Psoas muscle (tissue), 8 donors: ENCODE measurements at regions of chr4 and their contacts with region 1.

Region 1: GRCh38 chr4:182486881-182487280 is 243.7 kb downstream of the TENM3 start:
- DNase-seq: no peak
- ATAC-seq: no peak
- H3K4me3 ChIP-seq: no peak overlapping the region
- H3K27ac ChIP-seq: no peak overlapping the region
- H3K4me1 ChIP-seq: peaks cover 5% of the 10 kb centered on the region
- H3K27me3 ChIP-seq: no peaks in the 10 kb centered on the region
- CTCF ChIP-seq: no peak

Region 2: GRCh38 chr4:182555997-182556418 is 69.1 kb after region 1 on chr4:
- intact Hi-C with region 1: no loop called
- DNase-seq: no peak
- ATAC-seq: peak in 2 of 4 donors; percentile 44 to 68
- H3K4me3 ChIP-seq: no peak overlapping the region
- H3K27ac ChIP-seq: no peak overlapping the region
- H3K4me1 ChIP-seq: peaks cover 22% of the 10 kb centered on the region
- H3K27me3 ChIP-seq: no peaks in the 10 kb centered on the region
- CTCF ChIP-seq: no peak

Region 3: DNA sequence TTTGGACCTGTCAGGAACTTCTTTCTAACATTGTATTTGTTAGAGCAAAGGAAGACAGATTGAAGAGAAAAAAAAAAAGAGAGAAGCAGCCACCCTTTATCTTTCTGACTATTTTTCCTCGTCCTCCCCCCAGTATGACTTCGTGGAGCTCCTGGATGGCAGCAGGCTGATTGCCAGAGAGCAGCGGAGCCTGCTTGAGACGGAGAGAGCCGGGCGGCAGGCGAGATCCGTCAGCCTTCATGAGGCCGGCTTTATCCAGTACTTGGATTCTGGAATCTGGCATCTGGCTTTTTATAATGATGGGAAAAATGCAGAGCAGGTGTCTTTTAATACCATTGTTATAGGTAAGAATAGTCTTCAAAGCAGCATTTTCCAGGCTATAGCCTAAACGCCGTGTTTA is 192.7 kb after region 1 on chr4:
- intact Hi-C with region 1: loop called in 1 of 2 experiments (anchors 10 kb)
- DNase-seq: no peak
- ATAC-seq: peak in 3 of 4 donors; percentile 24 to 52 (median 46)
- H3K4me3 ChIP-seq: no peak overlapping the region
- H3K27ac ChIP-seq: no peak overlapping the region
- H3K4me1 ChIP-seq: peaks cover 3% of the 10 kb centered on the region
- H3K27me3 ChIP-seq: no peaks in the 10 kb centered on the region
- CTCF ChIP-seq: no peak